Ascending aorta (tissue), 2 donors: ENCODE measurements at regions of chr16 and their contacts with region 1.

Region 1: DNA sequence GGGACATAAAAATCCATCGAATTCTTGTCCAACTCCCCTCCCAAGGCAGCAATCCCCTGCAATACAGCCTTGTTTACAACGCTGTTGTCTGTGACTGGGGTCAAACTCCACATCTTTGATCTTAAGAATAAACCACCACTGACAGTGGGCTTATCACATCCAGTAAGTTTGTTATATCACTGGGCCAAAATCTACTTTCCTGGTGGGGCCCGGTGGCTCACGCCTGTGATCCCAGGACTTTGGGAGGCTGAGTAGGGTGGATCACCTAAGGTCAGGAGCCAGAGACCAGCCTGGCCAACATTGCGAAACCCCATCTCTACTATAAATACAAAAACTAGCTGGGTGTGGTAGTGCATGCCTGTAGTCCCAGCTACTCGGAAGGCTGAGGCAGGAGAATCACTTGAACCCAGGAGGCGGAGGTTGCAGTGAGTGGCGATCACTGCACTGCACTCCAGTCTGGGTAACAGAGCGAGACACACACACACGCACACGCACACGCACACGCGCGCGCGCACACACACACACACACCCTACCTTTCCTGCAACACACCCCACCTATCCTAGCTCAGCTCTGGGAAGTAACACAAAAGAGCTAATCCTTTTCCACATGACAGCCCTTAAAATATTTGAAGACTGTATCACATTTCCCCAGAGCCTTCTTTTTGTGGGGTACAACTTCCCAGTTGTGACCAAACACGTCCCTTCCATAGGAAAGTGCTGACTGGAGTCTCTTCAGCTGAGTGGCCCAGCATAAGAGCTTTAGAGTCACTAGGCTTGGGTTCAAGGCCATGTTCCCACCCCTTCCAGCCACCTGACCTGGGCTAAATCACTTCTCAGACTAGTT is 20.9 kb upstream of the ABCC1 start:
- DNase-seq: no peak
- H3K4me3 ChIP-seq: no peak overlapping the region
- H3K27ac ChIP-seq: no peak overlapping the region
- H3K4me1 ChIP-seq: no peaks in the 10 kb centered on the region
- H3K27me3 ChIP-seq: no peaks in the 10 kb centered on the region
- CTCF ChIP-seq: no peak

Region 2: DNA sequence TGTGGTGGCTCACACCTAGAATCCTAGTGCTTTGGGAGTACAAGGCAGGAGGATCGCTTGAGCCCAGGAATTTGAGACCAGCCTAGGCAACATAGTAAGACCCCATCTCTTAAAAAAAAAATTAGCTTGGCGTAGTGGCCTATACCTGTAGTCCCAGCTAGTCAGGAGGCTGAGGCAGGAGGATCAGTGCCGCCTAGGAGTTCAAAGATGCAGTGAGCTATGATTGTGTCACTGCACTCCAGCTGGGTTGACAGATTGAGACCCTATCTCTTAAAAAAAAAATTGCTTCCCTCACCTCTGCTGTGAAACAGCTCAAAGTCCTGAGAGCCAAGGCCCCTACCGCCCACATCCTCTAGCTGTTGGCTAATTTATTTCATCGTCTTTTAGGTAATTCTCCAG is 268.3 kb before region 1 on chr16:
- intact Hi-C with region 1: loop called (anchors 5 kb)
- DNase-seq: no peak
- H3K4me3 ChIP-seq: no peak overlapping the region
- H3K27ac ChIP-seq: no peak overlapping the region
- H3K4me1 ChIP-seq: no peaks in the 10 kb centered on the region
- H3K27me3 ChIP-seq: no peaks in the 10 kb centered on the region
- CTCF ChIP-seq: no peak